H1 (cell line): ENCODE measurements at regions of chr4 and their contacts with region 1.

Region 1: GRCh38 chr4:155787113-155787710 is 28.4 kb downstream of the GUCY1B1 start:
- DNase-seq: no peak
- H3K4me3 ChIP-seq: no peak overlapping the region
- H3K27ac ChIP-seq: no peak overlapping the region
- H3K4me1 ChIP-seq: no peaks in the 10 kb centered on the region
- H3K27me3 ChIP-seq: no peaks in the 10 kb centered on the region
- CTCF ChIP-seq: peak in 2 of 3 experiments; percentile 77 to 80; a peak in 3 of 4 replicates
- EP300 ChIP-seq: no peak
- POLR2A ChIP-seq: no peak
- RAD21 ChIP-seq: peak; percentile 96 to 97

Region 2: GRCh38 chr4:155400893-155401292 is 386.3 kb before region 1 on chr4:
- CTCF ChIA-PET with region 1: interaction called, 13 read pairs
- POLR2A ChIA-PET with region 1: no interaction called
- DNase-seq: no peak
- H3K4me3 ChIP-seq: no peak overlapping the region
- H3K27ac ChIP-seq: no peak overlapping the region
- H3K4me1 ChIP-seq: no peaks in the 10 kb centered on the region
- H3K27me3 ChIP-seq: 0 out of 7 replicates have a peak, but pooled peaks cover 0 to 4% (median 0%) of the 10 kb centered on the region in 4 experiments
- CTCF ChIP-seq: no peak
- EP300 ChIP-seq: no peak
- POLR2A ChIP-seq: no peak
- RAD21 ChIP-seq: no peak

Region 3: GRCh38 chr4:155442267-155443105 is 344.7 kb before region 1 on chr4:
- CTCF ChIA-PET with region 1: interaction called, 30 read pairs
- POLR2A ChIA-PET with region 1: no interaction called
- DNase-seq: peak; percentile 23 to 89
- H3K4me3 ChIP-seq: no peak overlapping the region
- H3K27ac ChIP-seq: no peak overlapping the region
- H3K4me1 ChIP-seq: no peaks in the 10 kb centered on the region
- H3K27me3 ChIP-seq: peaks cover 0 to 3% (median 1%) of the 10 kb centered on the region in 4 experiments; a peak in 2 of 7 replicates
- CTCF ChIP-seq: peak; percentile 71 to 92 (median 79)
- EP300 ChIP-seq: no peak
- POLR2A ChIP-seq: no peak
- RAD21 ChIP-seq: peak; percentile 85 to 88

Region 4: GRCh38 chr4:155529272-155529671 is 257.9 kb before region 1 on chr4:
- CTCF ChIA-PET with region 1: interaction called, 10 read pairs
- POLR2A ChIA-PET with region 1: no interaction called
- DNase-seq: no peak
- H3K4me3 ChIP-seq: no peak overlapping the region
- H3K27ac ChIP-seq: no peak overlapping the region
- H3K4me1 ChIP-seq: no peaks in the 10 kb centered on the region
- H3K27me3 ChIP-seq: no peaks in the 10 kb centered on the region
- CTCF ChIP-seq: peak in 2 of 3 experiments; percentile 44 to 56; a peak in 3 of 4 replicates
- EP300 ChIP-seq: no peak
- POLR2A ChIP-seq: no peak
- RAD21 ChIP-seq: peak; percentile 70 to 76

Region 5: GRCh38 chr4:155772459-155773195 is 14.6 kb before region 1 on chr4:
- CTCF ChIA-PET with region 1: interaction called, 13 read pairs
- POLR2A ChIA-PET with region 1: interaction called, 3 read pairs
- DNase-seq: no peak
- H3K4me3 ChIP-seq: no peak overlapping the region
- H3K27ac ChIP-seq: no peak overlapping the region
- H3K4me1 ChIP-seq: 0 out of 7 replicates have a peak, but pooled peaks cover 0 to 2% (median 0%) of the 10 kb centered on the region in 4 experiments
- H3K27me3 ChIP-seq: no peaks in the 10 kb centered on the region
- CTCF ChIP-seq: no peak
- EP300 ChIP-seq: no peak
- POLR2A ChIP-seq: no peak
- RAD21 ChIP-seq: no peak

Region 6: DNA sequence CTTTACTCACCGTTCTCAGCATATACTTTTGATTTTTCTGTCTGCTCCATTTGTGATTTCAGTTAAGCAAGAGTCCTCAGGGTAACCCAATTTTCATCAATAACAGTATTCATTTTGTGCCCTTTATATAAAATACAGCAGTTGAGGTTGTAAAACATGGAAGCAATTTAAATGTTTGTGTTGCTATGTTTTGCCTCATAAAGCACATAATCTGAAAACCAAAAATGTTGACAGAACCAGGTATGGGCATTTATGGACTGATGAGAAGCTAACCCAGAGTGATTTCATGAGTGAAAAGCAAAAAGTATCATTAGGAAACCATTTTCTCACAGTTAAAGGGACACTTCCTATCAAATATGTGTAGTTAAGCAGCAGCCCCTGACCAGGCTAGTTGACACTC is 79.0 kb after region 1 on chr4 and contains the start of gene ASIC5:
- CTCF ChIA-PET with region 1: no interaction called
- POLR2A ChIA-PET with region 1: no interaction called
- DNase-seq: no peak
- H3K4me3 ChIP-seq: no peak within 1 kb of the TSS
- H3K27ac ChIP-seq: no peak within 1 kb of the TSS
- H3K4me1 ChIP-seq: no peaks in the 10 kb centered on the region
- H3K27me3 ChIP-seq: no peaks in the 10 kb centered on the region
- CTCF ChIP-seq: no peak
- EP300 ChIP-seq: no peak
- POLR2A ChIP-seq: no peak
- RAD21 ChIP-seq: no peak
- total RNA-seq, gene ASIC5: not detected in 2 replicates

Region 7: DNA sequence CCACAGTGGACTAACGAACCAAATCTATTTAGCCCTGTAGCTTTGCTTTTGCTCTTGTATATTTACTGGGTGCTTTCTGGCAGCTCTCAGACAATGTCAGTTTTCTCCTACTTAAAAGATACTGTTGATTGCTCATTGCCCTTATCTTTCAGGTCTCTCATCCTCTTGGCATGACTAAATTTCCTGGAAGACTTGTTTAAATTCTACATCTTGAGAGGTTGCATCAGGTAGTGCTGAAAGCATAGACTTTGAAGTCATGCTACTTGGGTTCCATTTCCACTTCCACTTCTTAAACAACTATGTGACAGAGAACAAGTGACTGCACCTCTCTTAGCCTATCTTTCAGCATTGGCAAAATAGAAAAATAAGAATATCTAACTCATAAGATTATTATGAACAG is 124.7 kb after region 1 on chr4:
- CTCF ChIA-PET with region 1: no interaction called
- POLR2A ChIA-PET with region 1: no interaction called
- DNase-seq: no peak
- H3K4me3 ChIP-seq: no peak overlapping the region
- H3K27ac ChIP-seq: no peak overlapping the region
- H3K4me1 ChIP-seq: no peaks in the 10 kb centered on the region
- H3K27me3 ChIP-seq: no peaks in the 10 kb centered on the region
- CTCF ChIP-seq: no peak
- EP300 ChIP-seq: no peak
- POLR2A ChIP-seq: no peak
- RAD21 ChIP-seq: no peak